ENCODE measurements at regions of chr14 and their contacts with region 1.

Region 1: DNA sequence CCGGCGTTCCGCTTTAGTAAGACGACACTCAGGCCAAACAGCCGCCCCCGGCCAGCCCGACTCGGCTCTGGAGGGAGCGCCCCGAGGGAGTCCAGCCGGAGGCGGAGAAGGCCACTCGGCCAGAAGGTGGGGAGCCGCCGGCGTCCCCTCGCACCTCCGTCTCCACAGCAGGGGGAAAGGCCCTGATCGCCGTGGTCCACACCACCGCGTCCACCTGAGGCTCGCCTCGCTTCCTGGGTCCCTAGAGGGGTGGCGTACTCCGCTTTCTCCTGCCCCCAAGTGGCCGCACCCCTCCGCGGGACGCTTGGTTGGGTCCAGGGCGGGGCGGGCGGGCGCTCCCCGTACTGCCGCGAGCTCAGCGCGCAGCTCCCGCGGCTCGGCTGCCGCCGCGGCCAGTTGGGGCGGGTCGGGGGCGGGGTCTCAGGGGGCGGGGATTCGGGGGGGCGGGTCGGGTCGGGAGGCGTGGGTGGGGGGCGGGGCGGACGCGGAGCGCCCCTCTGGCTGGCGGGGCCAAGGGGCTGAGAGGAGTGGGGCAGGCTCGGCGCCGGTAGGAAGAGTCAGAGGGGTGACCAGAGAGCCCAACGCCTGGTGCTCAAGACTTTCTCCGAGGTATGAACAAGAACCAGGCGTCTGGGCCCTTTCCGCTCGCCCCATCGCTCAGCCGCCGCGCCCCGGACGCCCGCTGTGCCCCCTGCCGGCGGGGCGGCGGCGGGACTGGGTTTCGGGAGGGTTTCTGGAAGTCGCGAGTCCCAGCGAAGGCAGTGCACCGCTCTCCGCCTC is at the start of gene FRMD6:
- DNase-seq: peak; percentile 90
- ATAC-seq: peak; percentile 85
- H3K4me3 ChIP-seq: peak within 1 kb of the TSS; percentile 79
- H3K27ac ChIP-seq: peak within 1 kb of the TSS; percentile 99
- H3K4me1 ChIP-seq: no peaks in the 10 kb centered on the region
- H3K27me3 ChIP-seq: no peaks in the 10 kb centered on the region
- CTCF ChIP-seq: peak; percentile 80
- POLR2A ChIP-seq: peak; percentile 91
- RAD21 ChIP-seq: peak; percentile 70
- total RNA-seq, gene FRMD6: 620 and 682 TPM in 2 replicates

Region 2: DNA sequence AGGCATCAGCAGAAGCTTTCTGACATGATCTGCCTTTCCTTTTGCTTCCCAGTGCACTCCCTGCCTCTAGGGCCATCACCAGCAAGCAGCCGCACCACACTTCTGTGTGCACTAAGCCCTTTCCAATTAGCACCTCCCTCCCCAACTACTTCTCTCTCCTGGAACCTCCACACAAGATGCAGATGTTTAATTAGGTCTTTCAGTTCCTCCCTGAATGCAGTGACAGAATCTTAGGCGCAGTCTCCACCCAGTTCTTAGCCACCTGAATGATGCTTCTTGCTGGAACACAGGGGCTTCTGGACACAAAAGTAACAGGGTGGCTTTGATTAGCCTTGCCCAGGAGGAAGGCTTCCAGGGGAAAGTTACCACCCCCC is 853.5 kb before region 1 on chr14:
- CTCF ChIA-PET with region 1: no interaction called
- POLR2A ChIA-PET with region 1: no interaction called
- dilution Hi-C with region 1: no loop called
- in situ Hi-C with region 1: no loop called
- intact Hi-C with region 1: no loop called
- DNase-seq: no peak
- ATAC-seq: no peak
- H3K4me3 ChIP-seq: no peak overlapping the region
- H3K27ac ChIP-seq: no peak overlapping the region
- H3K4me1 ChIP-seq: peaks cover 23% of the 10 kb centered on the region
- H3K27me3 ChIP-seq: no peaks in the 10 kb centered on the region
- CTCF ChIP-seq: no peak
- POLR2A ChIP-seq: no peak
- RAD21 ChIP-seq: no peak

Region 3: DNA sequence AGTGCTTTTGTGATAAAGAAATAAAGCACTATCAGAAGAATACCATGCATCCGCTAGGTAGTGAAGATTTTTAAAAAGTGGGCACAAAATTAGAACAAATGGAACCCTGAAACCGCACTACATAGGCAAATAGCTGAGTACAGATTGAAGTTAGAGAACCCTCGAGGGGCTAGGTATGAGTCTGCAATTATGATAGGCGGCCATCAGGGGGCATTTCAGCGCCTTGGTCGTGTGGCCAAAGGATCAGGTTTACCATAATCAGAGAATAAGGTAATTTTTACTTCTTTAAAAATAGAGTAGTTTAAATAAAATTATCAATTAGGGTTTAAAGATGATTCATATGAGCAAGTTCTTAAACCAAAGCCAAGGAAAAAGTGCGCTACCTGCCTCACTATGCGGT is 281.8 kb before region 1 on chr14:
- CTCF ChIA-PET with region 1: no interaction called
- POLR2A ChIA-PET with region 1: no interaction called
- dilution Hi-C with region 1: no loop called
- in situ Hi-C with region 1: no loop called
- intact Hi-C with region 1: loop called (anchors 5 kb)
- DNase-seq: no peak
- ATAC-seq: no peak
- H3K4me3 ChIP-seq: no peak overlapping the region
- H3K27ac ChIP-seq: no peak overlapping the region
- H3K4me1 ChIP-seq: peaks cover 9% of the 10 kb centered on the region
- H3K27me3 ChIP-seq: no peaks in the 10 kb centered on the region
- CTCF ChIP-seq: no peak
- POLR2A ChIP-seq: no peak
- RAD21 ChIP-seq: peak; percentile 16; the same call in 1 of the 2 replicates

Region 4: DNA sequence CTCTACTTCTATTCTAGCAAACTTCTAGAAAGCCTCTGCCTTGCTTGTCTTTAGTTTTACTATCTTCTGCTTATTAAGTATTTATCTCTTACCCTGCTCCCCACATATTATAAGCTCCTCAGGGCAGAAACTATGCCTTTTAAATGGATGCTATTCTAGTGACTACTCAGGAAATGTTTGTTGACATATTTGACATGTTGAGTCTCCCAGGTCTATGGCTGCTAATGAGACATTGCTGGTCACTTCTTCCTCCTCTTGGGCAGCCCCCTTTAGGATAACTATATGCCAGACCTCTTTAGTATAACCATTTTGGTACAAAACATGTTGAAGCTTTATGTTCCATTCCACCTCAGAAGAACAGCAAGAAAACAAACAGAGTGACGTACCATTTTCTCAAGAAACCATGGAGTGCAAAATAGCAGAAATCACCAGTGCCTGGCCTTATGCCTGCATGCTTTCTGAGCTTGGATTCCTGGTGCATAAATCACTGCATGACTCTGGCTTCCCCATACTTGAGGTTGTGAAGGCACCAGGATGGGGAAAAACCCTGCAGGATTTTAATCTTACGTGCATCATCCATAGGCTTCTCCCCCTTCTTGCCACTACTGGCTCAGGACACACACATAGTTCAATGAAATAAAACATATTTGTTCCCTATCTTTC is 208.9 kb before region 1 on chr14:
- CTCF ChIA-PET with region 1: no interaction called
- POLR2A ChIA-PET with region 1: interaction called, 3 read pairs
- dilution Hi-C with region 1: no loop called
- in situ Hi-C with region 1: no loop called
- intact Hi-C with region 1: loop called (anchors 1 kb)
- DNase-seq: peak; percentile 99
- ATAC-seq: peak; percentile 87
- H3K4me3 ChIP-seq: no peak overlapping the region
- H3K27ac ChIP-seq: peak overlapping the region; percentile 88
- H3K4me1 ChIP-seq: peaks cover 17% of the 10 kb centered on the region
- H3K27me3 ChIP-seq: no peaks in the 10 kb centered on the region
- CTCF ChIP-seq: no peak
- POLR2A ChIP-seq: no peak
- RAD21 ChIP-seq: peak; percentile 29; the same call in 1 of the 2 replicates

Region 5: GRCh38 chr14:51547260-51547659 is 104.3 kb before region 1 on chr14:
- CTCF ChIA-PET with region 1: no interaction called
- POLR2A ChIA-PET with region 1: interaction called, 4 read pairs
- dilution Hi-C with region 1: no loop called
- in situ Hi-C with region 1: no loop called
- intact Hi-C with region 1: loop called (anchors 5 kb)
- DNase-seq: peak; percentile 100
- ATAC-seq: peak; percentile 93
- H3K4me3 ChIP-seq: no peak overlapping the region
- H3K27ac ChIP-seq: no peak overlapping the region
- H3K4me1 ChIP-seq: peaks cover 17% of the 10 kb centered on the region
- H3K27me3 ChIP-seq: no peaks in the 10 kb centered on the region
- CTCF ChIP-seq: no peak
- POLR2A ChIP-seq: peak; percentile 31; the same call in 1 of the 2 replicates
- RAD21 ChIP-seq: no peak; the same call in 1 of the 2 replicates

Region 6: GRCh38 chr14:51780006-51780692 is 128.6 kb after region 1 on chr14:
- CTCF ChIA-PET with region 1: interaction called, 3 read pairs
- POLR2A ChIA-PET with region 1: interaction called, 3 read pairs
- dilution Hi-C with region 1: no loop called
- in situ Hi-C with region 1: loop called (anchors 10 kb)
- intact Hi-C with region 1: loop called (anchors 2 kb)
- DNase-seq: peak; percentile 59
- ATAC-seq: peak; percentile 73
- H3K4me3 ChIP-seq: no peak overlapping the region
- H3K27ac ChIP-seq: no peak overlapping the region
- H3K4me1 ChIP-seq: peaks cover 2% of the 10 kb centered on the region; the same call in 1 of the 2 replicates
- H3K27me3 ChIP-seq: no peaks in the 10 kb centered on the region
- CTCF ChIP-seq: peak; percentile 71
- POLR2A ChIP-seq: no peak
- RAD21 ChIP-seq: peak; percentile 84

Region 7: GRCh38 chr14:51979088-51979709 is 327.6 kb after region 1 on chr14:
- CTCF ChIA-PET with region 1: no interaction called
- POLR2A ChIA-PET with region 1: no interaction called
- dilution Hi-C with region 1: no loop called
- in situ Hi-C with region 1: no loop called
- intact Hi-C with region 1: loop called (anchors 1 kb)
- DNase-seq: peak; percentile 79
- ATAC-seq: peak; percentile 83
- H3K4me3 ChIP-seq: no peak overlapping the region
- H3K27ac ChIP-seq: no peak overlapping the region
- H3K4me1 ChIP-seq: peaks cover 6% of the 10 kb centered on the region
- H3K27me3 ChIP-seq: peaks cover 10% of the 10 kb centered on the region
- CTCF ChIP-seq: peak; percentile 85
- POLR2A ChIP-seq: no peak
- RAD21 ChIP-seq: peak; percentile 90